ENCODE measurements at regions of chr20 and their contacts with region 1.

Region 1: GRCh38 chr20:59850018-59850641 is 83.3 kb downstream of the SYCP2 start:
- DNase-seq: no peak
- ATAC-seq: no peak
- H3K4me3 Mint-ChIP-seq: no peak overlapping the region
- H3K27ac Mint-ChIP-seq: no peak overlapping the region
- H3K4me1 Mint-ChIP-seq: no peaks in the 10 kb centered on the region
- H3K27me3 Mint-ChIP-seq: peaks cover 42% of the 10 kb centered on the region
- CTCF ChIP-seq: peak; percentile 51

Region 2: DNA sequence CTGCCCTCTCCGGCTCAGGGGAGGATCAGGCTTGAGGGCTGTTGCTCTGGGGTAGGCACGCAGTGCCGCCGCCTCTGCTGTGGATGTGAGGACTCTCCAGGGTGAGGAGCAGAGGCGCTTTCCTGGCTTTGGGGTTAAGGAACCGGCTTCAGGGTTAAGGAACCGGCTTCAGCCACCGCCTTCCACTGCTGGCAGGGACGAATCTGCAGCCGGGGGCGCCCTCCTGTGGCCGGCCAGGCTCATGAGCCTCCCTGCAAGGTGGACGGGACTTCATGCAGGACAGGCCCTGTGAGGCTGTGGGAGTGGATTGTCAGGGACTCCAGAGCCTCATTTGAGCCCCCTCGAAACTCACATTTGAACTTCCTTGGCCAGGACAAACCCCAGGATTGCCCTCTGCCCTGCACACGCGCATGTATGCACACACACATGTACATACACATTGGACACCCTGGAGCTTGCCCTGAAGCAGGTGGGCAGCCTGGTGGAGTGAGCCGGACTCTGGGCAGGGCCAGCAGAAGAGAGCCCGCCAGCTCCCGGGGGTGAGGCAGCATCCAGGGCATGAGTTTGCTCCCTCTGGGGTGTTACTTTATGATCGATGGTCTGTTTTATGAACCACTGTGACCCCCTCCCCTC is 99.0 kb before region 1 on chr20:
- CTCF ChIA-PET with region 1: interaction called, 10 read pairs
- POLR2A ChIA-PET with region 1: no interaction called
- DNase-seq: peak; percentile 87
- ATAC-seq: peak; percentile 89
- H3K4me3 Mint-ChIP-seq: no peak overlapping the region
- H3K27ac Mint-ChIP-seq: no peak overlapping the region
- H3K4me1 Mint-ChIP-seq: peaks cover 3% of the 10 kb centered on the region; the same call in 1 of the 2 replicates
- H3K27me3 Mint-ChIP-seq: peaks cover 49% of the 10 kb centered on the region
- CTCF ChIP-seq: peak; percentile 61

Region 3: GRCh38 chr20:59771506-59772372 is 78.4 kb before region 1 on chr20:
- CTCF ChIA-PET with region 1: interaction called, 12 read pairs
- POLR2A ChIA-PET with region 1: no interaction called
- DNase-seq: no peak
- ATAC-seq: no peak
- H3K4me3 Mint-ChIP-seq: no peak overlapping the region
- H3K27ac Mint-ChIP-seq: no peak overlapping the region
- H3K4me1 Mint-ChIP-seq: 0 out of 2 replicates have a peak, but pooled peaks cover 2% of the 10 kb centered on the region
- H3K27me3 Mint-ChIP-seq: peaks cover 26% of the 10 kb centered on the region
- CTCF ChIP-seq: no peak

Region 4: GRCh38 chr20:59782986-59783640 is 67.0 kb before region 1 on chr20:
- CTCF ChIA-PET with region 1: interaction called, 89 read pairs
- POLR2A ChIA-PET with region 1: no interaction called
- DNase-seq: peak; percentile 87
- ATAC-seq: peak; percentile 94
- H3K4me3 Mint-ChIP-seq: no peak overlapping the region
- H3K27ac Mint-ChIP-seq: no peak overlapping the region
- H3K4me1 Mint-ChIP-seq: no peaks in the 10 kb centered on the region
- H3K27me3 Mint-ChIP-seq: peaks cover 8% of the 10 kb centered on the region
- CTCF ChIP-seq: peak; percentile 63

Region 5: GRCh38 chr20:59812286-59813122 is 37.6 kb before region 1 on chr20:
- CTCF ChIA-PET with region 1: interaction called, 10 read pairs
- POLR2A ChIA-PET with region 1: no interaction called
- DNase-seq: no peak
- ATAC-seq: no peak
- H3K4me3 Mint-ChIP-seq: no peak overlapping the region
- H3K27ac Mint-ChIP-seq: no peak overlapping the region
- H3K4me1 Mint-ChIP-seq: no peaks in the 10 kb centered on the region
- H3K27me3 Mint-ChIP-seq: peaks cover 9% of the 10 kb centered on the region
- CTCF ChIP-seq: no peak

Region 6: DNA sequence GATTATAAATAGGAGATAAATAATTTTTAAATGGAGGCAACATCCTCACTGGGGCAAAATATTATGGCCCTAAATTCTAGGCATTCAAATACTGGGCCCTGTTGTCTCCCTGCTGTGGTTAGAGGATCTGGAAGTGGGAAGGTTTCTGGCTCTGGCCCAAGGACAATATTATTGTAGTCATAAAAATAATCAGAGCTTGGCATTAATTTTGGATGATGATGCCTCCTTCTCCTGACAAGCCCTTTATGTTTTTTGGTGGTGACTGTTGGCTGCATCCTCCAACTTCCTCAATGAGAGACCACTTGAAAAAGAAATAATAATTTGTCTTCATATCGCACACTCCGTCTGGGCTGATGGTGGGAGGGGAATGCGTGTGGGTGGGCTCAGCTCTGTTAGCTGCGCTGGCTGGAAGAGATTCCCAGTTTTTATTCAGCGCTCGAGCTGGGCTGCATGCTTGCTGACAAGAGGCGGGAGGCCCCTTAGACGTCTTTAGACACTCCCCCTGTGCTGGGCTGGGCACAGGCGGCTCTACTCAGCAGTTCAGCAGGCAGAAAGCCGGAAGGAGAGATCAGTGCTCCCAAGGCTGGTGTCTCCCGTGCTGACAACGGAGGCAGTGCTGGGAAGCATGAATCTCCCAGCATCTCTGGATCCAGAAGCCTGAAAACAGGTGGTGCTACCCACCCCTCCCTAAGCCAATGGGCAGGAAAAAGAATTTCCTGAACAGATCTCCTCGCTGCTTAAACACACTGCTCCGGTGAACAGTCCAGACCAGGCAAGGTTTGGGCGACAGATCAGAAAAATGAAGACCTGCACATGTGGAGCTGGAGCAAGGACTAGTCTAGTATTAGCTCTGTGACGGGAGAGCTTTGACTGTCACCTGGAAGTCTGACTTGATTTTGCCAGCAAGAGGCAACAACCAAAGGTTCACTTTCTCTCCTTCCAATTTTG is 14.4 kb before region 1 on chr20:
- CTCF ChIA-PET with region 1: interaction called, 18 read pairs
- POLR2A ChIA-PET with region 1: no interaction called
- DNase-seq: peak; percentile 41
- ATAC-seq: peak; percentile 93
- H3K4me3 Mint-ChIP-seq: no peak overlapping the region
- H3K27ac Mint-ChIP-seq: no peak overlapping the region
- H3K4me1 Mint-ChIP-seq: peaks cover 21% of the 10 kb centered on the region
- H3K27me3 Mint-ChIP-seq: peaks cover 30% of the 10 kb centered on the region
- CTCF ChIP-seq: no peak

Region 7: DNA sequence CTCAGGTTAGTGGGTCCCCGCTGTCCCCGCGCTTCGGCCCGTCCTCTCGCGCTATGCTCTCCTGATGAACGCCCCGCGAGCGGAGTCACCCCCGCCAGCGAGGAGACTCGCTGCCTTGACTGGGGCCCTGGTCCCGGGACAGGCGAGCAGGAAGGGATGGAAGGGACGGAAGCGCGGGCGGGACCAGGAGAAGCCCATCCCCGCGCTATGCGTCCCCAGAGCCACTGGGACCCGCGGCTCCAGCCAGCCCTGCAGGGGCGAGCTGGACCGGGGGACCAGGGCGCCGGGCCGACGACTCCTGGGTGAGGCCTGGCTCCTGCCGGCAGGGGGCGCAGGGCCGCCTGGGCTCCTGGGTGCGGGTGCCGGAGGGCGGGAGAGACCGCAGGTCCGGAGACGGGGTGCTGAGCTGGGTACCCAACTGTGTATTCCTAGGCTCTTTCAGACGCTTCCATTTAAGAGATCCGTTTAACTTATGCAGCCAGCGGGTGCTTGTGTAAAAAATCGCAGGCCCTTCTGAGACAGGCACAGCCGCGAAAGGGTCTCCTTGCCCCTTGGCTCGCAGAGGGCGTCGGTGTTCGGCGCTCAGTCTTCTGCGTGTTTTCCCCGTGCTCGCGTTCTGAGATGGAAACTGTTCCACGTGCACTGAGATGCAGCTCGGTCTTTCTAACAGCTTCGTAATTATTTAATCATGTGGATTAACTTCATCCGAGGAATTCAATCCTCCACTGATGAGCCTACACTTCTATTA is 83.9 kb after region 1 on chr20:
- CTCF ChIA-PET with region 1: interaction called, 10 read pairs
- POLR2A ChIA-PET with region 1: no interaction called
- DNase-seq: peak; percentile 78
- ATAC-seq: peak; percentile 93
- H3K4me3 Mint-ChIP-seq: peak overlapping the region; percentile 63
- H3K27ac Mint-ChIP-seq: no peak overlapping the region
- H3K4me1 Mint-ChIP-seq: peaks cover 6% of the 10 kb centered on the region; the same call in 1 of the 2 replicates
- H3K27me3 Mint-ChIP-seq: peaks cover 59% of the 10 kb centered on the region
- CTCF ChIP-seq: peak; percentile 72